Right ventricle myocardium superior (tissue), 1 donor: ENCODE measurements at regions of chr3 and their contacts with region 1.

Region 1: DNA sequence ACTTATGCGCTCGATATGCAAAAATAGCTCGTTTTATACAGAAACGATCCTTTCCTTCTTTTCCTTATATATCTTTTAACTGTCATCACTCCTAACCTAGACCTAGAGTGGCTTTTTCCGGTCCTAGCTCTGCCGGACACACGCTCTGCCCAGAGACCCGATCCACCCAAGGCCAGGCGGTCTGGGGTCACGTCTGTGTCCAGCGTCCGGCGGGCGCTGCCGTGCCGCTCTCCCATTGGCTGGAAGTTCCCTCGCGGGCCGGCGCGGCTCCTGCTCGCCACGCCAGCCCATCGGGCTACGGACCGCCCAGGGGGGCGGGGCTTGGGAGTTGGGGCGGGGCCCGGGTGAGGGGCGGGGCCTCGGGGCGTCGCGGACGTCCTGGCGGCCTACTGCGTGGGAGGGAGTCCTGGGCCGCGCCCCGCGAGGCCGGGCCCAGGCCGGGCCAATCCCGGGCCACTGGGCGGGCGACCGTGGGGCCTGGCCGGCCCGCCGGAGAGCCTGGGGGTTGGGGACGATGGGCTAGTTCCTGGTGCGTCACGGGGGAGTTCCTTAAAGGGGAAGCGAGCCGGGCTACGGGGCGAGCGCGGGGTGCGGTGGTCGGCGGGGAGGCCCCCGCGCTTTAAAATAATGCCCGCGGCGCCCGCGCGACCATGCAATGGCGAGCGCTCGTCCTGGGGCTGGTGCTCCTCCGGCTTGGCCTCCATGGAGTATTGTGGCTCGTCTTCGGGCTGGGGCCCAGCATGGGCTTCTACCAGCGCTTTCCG is at the start of gene EDEM1:
- DNase-seq: peak; percentile 96
- ATAC-seq: peak; percentile 97
- total RNA-seq, gene EDEM1: 7.4 TPM

Region 2: DNA sequence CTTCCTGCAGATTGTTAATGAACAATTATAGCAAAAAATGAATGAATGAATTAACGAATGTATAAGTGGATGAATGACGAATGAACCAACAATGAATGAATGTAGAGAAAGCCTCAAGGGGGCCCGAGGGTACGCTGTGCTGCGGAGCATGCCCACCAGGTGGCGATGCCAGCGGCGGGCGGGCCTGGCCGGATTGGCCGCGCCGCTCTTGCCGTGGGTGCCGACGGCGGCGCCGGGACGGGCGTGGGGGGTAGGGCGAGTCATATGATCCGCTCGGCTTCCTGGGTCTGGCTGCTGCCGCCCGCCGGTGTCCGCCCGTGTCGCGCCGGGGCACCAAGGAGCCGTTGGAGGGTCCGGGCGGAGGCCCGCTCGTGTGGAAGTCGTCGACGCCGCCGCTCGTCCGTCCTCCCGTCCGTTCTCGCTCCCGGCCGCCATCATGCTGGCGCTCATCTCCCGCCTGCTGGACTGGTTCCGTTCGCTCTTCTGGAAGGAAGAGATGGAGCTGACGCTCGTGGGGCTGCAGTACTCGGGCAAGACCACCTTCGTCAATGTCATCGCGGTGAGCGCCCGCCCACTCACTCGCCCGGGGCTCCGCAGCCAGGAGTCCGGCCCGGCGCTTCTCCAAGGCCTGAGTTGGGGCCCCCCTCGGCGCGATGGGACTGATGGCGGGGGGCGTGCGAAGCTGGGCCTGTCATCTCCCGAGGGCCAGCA is 65.2 kb before region 1 on chr3 and contains the start of gene ARL8B:
- intact Hi-C with region 1: loop called (anchors 5 kb)
- DNase-seq: peak; percentile 94
- ATAC-seq: peak; percentile 100
- total RNA-seq, gene ARL8B: 62.2 TPM

Region 3: GRCh38 chr3:5153074-5153473 is 34.3 kb before region 1 on chr3:
- intact Hi-C with region 1: loop called (anchors 2 kb)
- DNase-seq: no peak
- ATAC-seq: no peak